GM12878 (cell line): ENCODE measurements at regions of chr10 and their contacts with region 1.

Region 1: DNA sequence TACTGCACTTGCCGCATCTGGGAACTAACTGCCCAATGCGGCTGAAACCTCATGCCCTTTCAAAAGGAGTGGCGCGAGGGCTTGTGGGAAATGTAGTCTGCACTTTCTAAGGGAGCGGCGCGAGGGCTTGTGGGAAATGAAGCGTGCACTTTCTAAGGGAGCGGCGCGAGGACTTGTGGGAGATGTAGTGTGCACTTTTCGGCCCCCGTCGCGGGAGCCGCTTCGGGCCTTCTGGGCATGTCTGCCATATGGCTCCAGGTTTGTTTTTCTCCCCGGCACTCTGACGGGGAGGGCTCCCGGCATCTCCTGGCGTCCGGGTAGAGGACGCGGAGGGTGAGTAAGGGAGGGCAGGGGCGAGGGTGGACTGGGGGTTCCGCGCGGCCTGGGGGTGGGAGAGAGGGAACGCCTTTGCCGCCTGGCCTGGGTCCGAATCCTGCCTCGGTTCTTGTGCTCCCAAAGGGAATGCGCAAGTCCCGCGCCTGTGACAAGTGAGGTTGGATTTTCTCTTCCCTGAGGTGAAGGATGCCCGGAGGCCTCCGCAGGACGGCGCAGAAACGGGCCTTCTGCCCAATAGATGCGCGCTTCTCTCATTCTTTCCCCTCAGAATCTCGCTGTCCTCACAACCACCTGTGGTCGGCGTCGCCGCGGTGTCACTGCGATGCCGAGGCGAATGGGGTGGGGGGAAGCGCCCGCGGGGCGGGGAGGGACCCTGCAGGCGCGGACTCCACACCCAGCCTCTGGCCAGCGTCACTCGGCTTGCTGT is at the start of gene ZNF37A:
- DNase-seq: peak; percentile 83
- ATAC-seq: peak; percentile 99
- H3K4me3 ChIP-seq: peak within 1 kb of the TSS; percentile 79
- H3K27ac ChIP-seq: peak within 1 kb of the TSS; percentile 77
- H3K4me1 ChIP-seq: peaks cover 9% of the 10 kb centered on the region; the same call in 1 of the 2 replicates
- H3K27me3 ChIP-seq: no peaks in the 10 kb centered on the region
- CTCF ChIP-seq: no peak
- EP300 ChIP-seq: no peak
- POLR2A ChIP-seq: peak; percentile 69
- RAD21 ChIP-seq: no peak
- polyA plus RNA-seq, gene ZNF37A: 3.3 to 5.1 TPM

Region 2: DNA sequence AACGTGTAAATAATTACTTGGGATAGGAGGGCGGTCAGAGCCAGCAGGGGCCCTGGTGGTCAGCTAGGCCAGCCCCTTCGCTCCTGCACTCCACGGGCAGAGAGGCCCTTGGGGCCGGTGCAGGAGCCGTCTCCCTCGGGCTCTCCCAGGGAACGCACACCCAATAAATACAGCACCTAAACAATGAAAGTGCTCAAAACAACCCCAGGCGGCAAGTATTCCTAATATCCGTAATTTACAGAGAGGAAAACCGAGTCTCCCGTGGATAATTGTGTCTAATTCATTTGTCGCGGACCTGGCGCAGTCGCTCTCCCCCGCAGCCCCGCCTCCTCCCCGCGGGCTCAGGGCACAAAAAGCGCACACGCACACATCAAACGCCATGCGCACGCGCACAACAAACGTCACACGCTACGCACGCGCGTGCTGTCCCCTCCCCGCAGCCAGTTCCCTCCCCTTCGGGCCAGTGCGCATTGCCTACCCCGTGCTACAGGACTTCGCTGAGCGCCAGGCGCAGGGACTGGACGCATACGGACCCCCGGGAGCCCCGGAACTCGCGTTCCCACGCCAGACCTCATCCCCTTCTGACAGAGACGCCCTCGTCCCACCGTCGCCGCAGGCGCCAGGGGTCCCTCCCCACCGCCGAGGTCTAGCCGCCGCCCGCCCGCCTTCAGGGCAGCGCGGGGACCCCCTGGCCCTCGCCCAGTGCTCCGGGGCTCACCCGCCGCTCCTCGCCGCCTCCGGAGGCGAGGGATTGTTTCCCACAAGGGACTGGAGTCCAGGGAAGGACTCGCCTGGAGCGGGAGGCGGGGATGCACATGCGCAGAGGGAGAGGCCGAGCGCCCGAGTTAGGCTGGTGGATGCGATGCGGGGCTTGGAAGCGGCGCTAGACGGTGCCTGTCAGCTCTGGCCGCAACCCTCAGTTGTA is 236.8 kb before region 1 on chr10 and contains the start of gene ZNF248:
- CTCF ChIA-PET with region 1: no interaction called
- POLR2A ChIA-PET with region 1: no interaction called
- RAD21 ChIA-PET with region 1: no interaction called
- SMC1A ChIA-PET with region 1: interaction called, 3 read pairs
- in situ Hi-C with region 1: loop called (anchors 5 kb)
- intact Hi-C with region 1: loop called (anchors 1 kb)
- DNase-seq: peak; percentile 89
- ATAC-seq: peak; percentile 95
- H3K4me3 ChIP-seq: peak within 1 kb of the TSS; percentile 82
- H3K27ac ChIP-seq: peak within 1 kb of the TSS; percentile 78
- H3K4me1 ChIP-seq: no peaks in the 10 kb centered on the region; the same call in 1 of the 2 replicates
- H3K27me3 ChIP-seq: no peaks in the 10 kb centered on the region
- CTCF ChIP-seq: no peak
- EP300 ChIP-seq: no peak
- POLR2A ChIP-seq: peak; percentile 100
- RAD21 ChIP-seq: no peak
- polyA plus RNA-seq, gene ZNF248: 2.0 to 4.9 TPM

Region 3: DNA sequence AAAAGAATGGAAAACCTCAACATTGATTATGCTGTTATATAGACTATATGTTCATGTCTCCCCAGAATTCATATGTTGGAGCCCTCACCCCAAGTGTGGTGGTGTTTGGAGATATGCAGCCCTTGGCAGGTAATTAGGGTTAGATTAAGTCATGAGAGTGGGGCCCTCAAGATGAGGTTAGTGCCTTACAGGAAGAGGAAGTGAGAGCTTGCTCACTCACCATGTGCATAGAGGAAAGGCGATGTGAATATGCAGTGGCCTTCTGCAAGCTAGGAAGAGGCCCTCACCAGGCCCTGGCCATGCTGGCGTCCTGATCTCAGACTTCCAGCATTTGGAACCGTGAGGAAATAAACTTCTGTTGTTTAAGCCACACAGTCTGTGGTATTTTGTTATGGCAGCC is 69.1 kb before region 1 on chr10:
- CTCF ChIA-PET with region 1: no interaction called
- POLR2A ChIA-PET with region 1: no interaction called
- RAD21 ChIA-PET with region 1: interaction called, 3 read pairs
- SMC1A ChIA-PET with region 1: no interaction called
- in situ Hi-C with region 1: no loop called
- intact Hi-C with region 1: loop called (anchors 5 kb)
- DNase-seq: no peak
- ATAC-seq: peak; percentile 97
- H3K4me3 ChIP-seq: no peak overlapping the region
- H3K27ac ChIP-seq: peak overlapping the region; percentile 42
- H3K4me1 ChIP-seq: peaks cover 23% of the 10 kb centered on the region
- H3K27me3 ChIP-seq: no peaks in the 10 kb centered on the region
- CTCF ChIP-seq: no peak
- EP300 ChIP-seq: no peak
- POLR2A ChIP-seq: peak; percentile 30; the same call in 1 of the 2 replicates
- RAD21 ChIP-seq: no peak

Region 4: DNA sequence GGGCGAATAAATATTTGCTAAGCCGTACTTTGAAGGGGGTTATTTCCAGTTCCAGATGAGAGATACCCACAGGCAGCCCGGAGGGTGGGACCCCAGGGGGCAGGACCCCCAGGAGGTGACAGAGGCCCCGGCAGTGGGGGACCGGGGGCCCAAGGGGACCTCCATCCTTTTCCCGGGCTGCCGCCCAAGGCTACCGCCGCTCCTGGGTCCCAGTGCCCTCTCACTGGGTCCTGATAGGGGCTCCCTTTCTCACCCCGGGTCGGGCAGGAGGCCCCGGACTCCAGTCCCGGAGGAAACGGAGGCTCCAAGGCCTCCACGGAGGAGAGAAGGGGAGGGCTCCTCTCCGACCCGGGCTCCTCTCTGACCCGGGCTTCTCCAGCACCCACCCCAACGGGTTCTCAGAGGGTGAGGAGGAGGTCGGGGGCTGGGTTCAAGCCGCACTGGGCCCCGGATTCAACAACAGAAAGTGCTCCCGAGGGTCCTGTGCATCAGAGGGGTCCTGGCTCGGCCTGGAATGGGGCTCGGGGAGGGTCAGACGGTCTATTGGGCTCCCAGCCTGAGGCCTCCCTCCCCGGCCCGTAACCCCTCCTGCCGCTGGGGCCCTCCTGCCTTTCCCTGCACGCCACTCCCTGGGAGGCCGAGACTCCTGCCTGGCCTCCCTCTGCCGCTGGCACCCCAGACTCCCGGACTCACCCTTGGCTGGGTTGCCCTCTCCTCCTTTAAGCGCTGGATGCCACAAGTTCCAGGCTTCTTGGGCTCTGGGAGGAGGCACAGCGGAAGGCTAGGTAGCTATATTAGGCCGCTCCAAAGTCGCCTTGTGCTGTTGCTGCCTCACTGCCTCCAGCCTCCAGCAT is 62.3 kb after region 1 on chr10:
- CTCF ChIA-PET with region 1: no interaction called
- POLR2A ChIA-PET with region 1: no interaction called
- RAD21 ChIA-PET with region 1: no interaction called
- SMC1A ChIA-PET with region 1: no interaction called
- in situ Hi-C with region 1: no loop called
- intact Hi-C with region 1: no loop called
- DNase-seq: no peak
- ATAC-seq: no peak
- H3K4me3 ChIP-seq: no peak overlapping the region
- H3K27ac ChIP-seq: no peak overlapping the region
- H3K4me1 ChIP-seq: no peaks in the 10 kb centered on the region
- H3K27me3 ChIP-seq: no peaks in the 10 kb centered on the region
- CTCF ChIP-seq: no peak
- EP300 ChIP-seq: no peak
- POLR2A ChIP-seq: no peak
- RAD21 ChIP-seq: no peak